Ovary (tissue), 10 donors: ENCODE measurements at regions of chr15 and their contacts with region 1.

Region 1: GRCh38 chr15:92565351-92566125 is 90.0 kb downstream of the FAM174B start:
- DNase-seq: no peak
- H3K4me3 ChIP-seq: no peak overlapping the region
- H3K27ac ChIP-seq: no peak overlapping the region
- H3K4me1 ChIP-seq: no peaks in the 10 kb centered on the region
- H3K27me3 ChIP-seq: no peaks in the 10 kb centered on the region
- CTCF ChIP-seq: no peak
- EP300 ChIP-seq: no peak
- POLR2A ChIP-seq: no peak

Region 2: GRCh38 chr15:91302588-91303439 is 1262.7 kb before region 1 on chr15:
- intact Hi-C with region 1: loop called in 1 of 4 experiments (anchors 5 kb)
- DNase-seq: peak in 2 of 5 donors; percentile 17 to 23
- H3K4me3 ChIP-seq: no peak overlapping the region
- H3K27ac ChIP-seq: no peak overlapping the region
- H3K4me1 ChIP-seq: no peaks in the 10 kb centered on the region
- H3K27me3 ChIP-seq: no peaks in the 10 kb centered on the region
- CTCF ChIP-seq: peak in 1 of 3 donors; percentile 37
- EP300 ChIP-seq: no peak
- POLR2A ChIP-seq: no peak

Region 3: DNA sequence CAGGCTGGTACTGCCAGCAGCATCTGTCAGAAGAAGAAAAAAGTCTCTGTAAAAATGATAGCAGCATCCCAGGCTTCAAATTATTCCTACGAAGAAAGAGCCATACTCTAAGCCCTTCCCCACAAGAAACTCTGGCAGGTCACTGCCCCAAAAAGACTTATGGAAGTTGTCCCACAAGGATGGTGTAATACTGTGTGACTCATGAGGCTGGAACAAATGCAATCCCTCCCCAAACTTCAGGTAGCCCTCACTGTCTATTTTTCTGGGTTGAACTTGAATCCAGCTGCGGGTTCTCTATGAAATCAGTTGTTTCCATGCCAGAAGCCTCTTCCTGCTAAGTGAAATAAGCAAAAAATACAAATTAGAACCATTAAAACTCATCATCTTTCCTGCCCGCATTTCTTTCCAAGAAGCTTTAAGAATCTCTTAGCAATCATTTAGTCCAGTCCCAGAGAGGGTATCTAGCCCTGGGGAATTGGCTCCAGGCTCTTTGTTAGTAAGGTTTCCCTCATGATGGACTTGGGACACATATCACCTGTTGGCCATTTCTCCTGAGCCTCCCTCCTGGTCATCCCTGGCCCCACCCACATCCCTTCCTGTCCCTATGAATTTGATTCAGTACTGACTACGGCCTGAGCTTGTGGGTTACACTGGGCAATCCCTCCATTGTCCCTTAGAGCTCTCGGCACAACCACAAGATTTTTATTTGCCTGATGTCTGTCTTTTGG is 38.4 kb after region 1 on chr15:
- intact Hi-C with region 1: loop called in 1 of 4 experiments (anchors 2 kb)
- DNase-seq: peak in 1 of 5 donors; percentile 54
- H3K4me3 ChIP-seq: no peak overlapping the region
- H3K27ac ChIP-seq: no peak overlapping the region
- H3K4me1 ChIP-seq: no peaks in the 10 kb centered on the region
- H3K27me3 ChIP-seq: no peaks in the 10 kb centered on the region
- CTCF ChIP-seq: no peak
- EP300 ChIP-seq: no peak
- POLR2A ChIP-seq: no peak

Region 4: DNA sequence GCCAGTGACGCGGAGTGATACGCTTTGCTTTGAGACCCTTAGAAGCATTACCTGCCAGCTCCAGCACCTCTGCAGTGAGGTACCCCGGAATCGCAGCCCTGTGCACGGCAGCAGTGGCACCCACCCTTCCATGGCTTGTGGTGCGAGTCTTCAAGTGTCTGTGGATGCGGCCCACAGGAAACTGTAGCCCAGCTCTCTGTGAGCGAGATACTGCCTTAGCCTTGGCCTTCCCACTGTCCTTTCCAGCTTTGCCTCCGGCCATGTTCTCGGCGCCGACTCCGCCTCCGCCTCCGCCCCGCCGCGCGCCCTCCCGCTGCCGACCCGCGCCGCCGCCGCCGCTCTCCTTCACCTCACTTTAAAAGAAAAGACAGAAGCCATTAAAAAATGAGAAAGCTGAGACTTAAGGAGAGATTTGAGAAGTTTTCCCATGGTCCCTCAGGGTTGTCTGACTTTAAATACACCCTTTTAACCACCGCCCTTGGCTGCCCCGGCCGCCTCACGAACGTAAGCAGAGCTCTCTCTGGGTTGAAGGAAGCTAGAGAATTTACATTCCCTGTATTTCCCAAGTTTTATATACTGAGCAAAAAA is 168.5 kb after region 1 on chr15:
- intact Hi-C with region 1: no loop called
- DNase-seq: peak in 4 of 5 donors; percentile 37 to 61 (median 51)
- H3K4me3 ChIP-seq: peak overlapping the region; percentile 30
- H3K27ac ChIP-seq: peak overlapping the region; percentile 32 to 86
- H3K4me1 ChIP-seq: no peaks in the 10 kb centered on the region
- H3K27me3 ChIP-seq: no peaks in the 10 kb centered on the region
- CTCF ChIP-seq: no peak
- EP300 ChIP-seq: no peak
- POLR2A ChIP-seq: no peak